ENCODE measurements at regions of chr3 and their contacts with region 1.

Region 1: GRCh38 chr3:86563400-86563970 is 427.5 kb downstream of the VGLL3 start:
- DNase-seq: no peak
- ATAC-seq: peak; percentile 65; the same call in 2 of the 3 replicates
- H3K4me3 ChIP-seq: no peak overlapping the region
- H3K27ac ChIP-seq: no peak overlapping the region
- H3K4me1 ChIP-seq: no peaks in the 10 kb centered on the region
- H3K27me3 ChIP-seq: no peaks in the 10 kb centered on the region
- CTCF ChIP-seq: peak; percentile 51 to 60 (median 52); a peak in 5 of 6 replicates
- EP300 ChIP-seq: no peak
- POLR2A ChIP-seq: no peak
- RAD21 ChIP-seq: peak; percentile 38

Region 2: GRCh38 chr3:85821130-85821756 is 742.2 kb before region 1 on chr3:
- CTCF ChIA-PET with region 1: interaction called, 24 read pairs
- POLR2A ChIA-PET with region 1: no interaction called
- RAD21 ChIA-PET with region 1: no interaction called
- SMC1A ChIA-PET with region 1: interaction called, 3 read pairs
- in situ Hi-C with region 1: no loop called
- intact Hi-C with region 1: loop called (anchors 1 kb)
- DNase-seq: no peak
- ATAC-seq: peak; percentile 86
- H3K4me3 ChIP-seq: no peak overlapping the region
- H3K27ac ChIP-seq: no peak overlapping the region
- H3K4me1 ChIP-seq: no peaks in the 10 kb centered on the region
- H3K27me3 ChIP-seq: no peaks in the 10 kb centered on the region
- CTCF ChIP-seq: peak; percentile 46 to 64 (median 51)
- EP300 ChIP-seq: no peak
- POLR2A ChIP-seq: no peak
- RAD21 ChIP-seq: peak; percentile 35; the same call in 1 of the 2 replicates

Region 3: GRCh38 chr3:86185501-86185900 is 378.0 kb before region 1 on chr3:
- CTCF ChIA-PET with region 1: no interaction called
- POLR2A ChIA-PET with region 1: no interaction called
- RAD21 ChIA-PET with region 1: no interaction called
- SMC1A ChIA-PET with region 1: no interaction called
- in situ Hi-C with region 1: no loop called
- intact Hi-C with region 1: loop called (anchors 10 kb)
- DNase-seq: no peak
- ATAC-seq: no peak
- H3K4me3 ChIP-seq: no peak overlapping the region
- H3K27ac ChIP-seq: no peak overlapping the region
- H3K4me1 ChIP-seq: no peaks in the 10 kb centered on the region
- H3K27me3 ChIP-seq: no peaks in the 10 kb centered on the region
- CTCF ChIP-seq: no peak
- EP300 ChIP-seq: no peak
- POLR2A ChIP-seq: no peak
- RAD21 ChIP-seq: no peak

Measured in GM12878 (cell line).